Sigmoid colon (tissue), 7 donors: ENCODE measurements at regions of chr6 and their contacts with region 1.

Region 1: DNA sequence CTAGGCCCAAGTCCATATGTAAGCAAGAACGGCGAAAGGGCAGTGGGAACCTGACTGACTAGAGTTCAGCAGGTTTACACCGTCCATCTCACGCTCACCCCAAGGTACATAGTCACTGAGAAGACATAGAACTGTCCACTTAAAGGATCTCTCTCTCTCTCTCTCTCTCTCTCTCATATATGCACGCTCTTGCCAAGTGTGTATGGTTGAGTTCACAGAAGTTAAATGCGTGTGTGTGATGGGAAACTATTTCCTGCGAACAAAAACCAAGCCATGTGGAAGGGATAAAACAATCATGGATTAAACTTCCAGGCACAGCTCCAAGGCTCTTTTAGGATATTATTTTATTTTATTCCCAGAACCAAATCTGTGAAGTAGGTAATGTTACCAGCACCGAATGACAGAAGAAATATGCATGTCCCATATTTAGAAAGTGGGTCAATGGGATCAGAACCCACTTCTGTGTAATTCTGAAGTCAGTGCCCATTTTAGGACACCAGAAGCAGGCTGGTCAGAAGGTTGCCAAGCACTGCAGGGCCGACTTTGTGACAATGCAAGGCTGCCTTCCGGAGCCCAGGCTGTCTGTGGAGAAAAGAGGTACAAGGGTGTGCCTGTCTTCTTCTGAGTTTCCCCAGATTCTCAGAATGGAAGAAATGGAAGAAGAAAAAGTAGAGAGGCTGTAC is 49.2 kb upstream of the MAP7 start:
- DNase-seq: no peak
- H3K4me3 ChIP-seq: no peak overlapping the region
- H3K27ac ChIP-seq: peak overlapping the region; percentile 25 to 62 (median 54)
- H3K4me1 ChIP-seq: peaks cover 0 to 32% (median 30%) of the 10 kb centered on the region in 4 donors
- H3K27me3 ChIP-seq: no peaks in the 10 kb centered on the region
- CTCF ChIP-seq: no peak
- EP300 ChIP-seq: no peak
- POLR2A ChIP-seq: no peak

Region 2: DNA sequence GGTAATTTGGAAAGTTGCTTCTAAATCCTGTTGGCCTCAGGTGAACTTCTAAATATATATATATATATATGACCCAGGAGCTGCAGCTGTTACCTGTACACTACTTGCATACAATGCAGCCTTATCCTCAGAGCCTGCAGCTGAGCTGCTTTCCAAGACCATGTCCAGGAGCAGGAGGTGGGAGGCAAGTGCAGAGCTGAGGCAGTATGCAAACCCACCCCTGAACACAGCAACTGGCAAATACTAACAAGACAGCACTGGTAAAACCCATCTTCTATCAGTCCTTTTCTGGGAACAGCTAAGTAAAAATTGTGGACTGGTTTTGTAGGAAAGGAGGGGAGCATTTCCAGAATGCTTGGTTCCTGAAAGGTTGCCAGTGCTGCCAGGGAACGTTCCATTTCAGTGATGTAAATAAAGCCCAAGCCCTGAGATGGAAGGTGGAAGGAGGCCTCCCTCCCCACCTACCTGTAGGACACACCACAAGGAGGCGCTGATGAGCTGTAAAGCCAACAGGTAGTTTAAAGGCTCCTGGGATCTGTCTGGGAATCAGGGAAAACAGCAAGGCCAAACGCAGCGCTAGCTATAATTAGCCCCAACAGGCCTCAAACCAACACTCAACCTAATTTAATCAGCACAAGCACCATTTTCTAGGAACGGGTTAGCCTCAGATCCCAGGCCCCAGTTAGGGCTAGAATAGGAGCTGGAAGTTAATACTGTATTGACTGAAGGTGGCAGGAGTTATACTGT is 44.6 kb after region 1 on chr6:
- intact Hi-C with region 1: loop called (anchors 5 kb)
- DNase-seq: peak; percentile 91
- H3K4me3 ChIP-seq: no peak overlapping the region
- H3K27ac ChIP-seq: peak overlapping the region in 3 of 4 donors; percentile 38 to 73 (median 54)
- H3K4me1 ChIP-seq: peaks cover 0 to 28% (median 17%) of the 10 kb centered on the region in 4 donors
- H3K27me3 ChIP-seq: no peaks in the 10 kb centered on the region
- CTCF ChIP-seq: peak; percentile 44 to 78 (median 61)
- EP300 ChIP-seq: no peak
- POLR2A ChIP-seq: no peak

Region 3: GRCh38 chr6:136677831-136678230 is 78.4 kb after region 1 on chr6:
- intact Hi-C with region 1: no loop called
- DNase-seq: no peak
- H3K4me3 ChIP-seq: no peak overlapping the region
- H3K27ac ChIP-seq: no peak overlapping the region
- H3K4me1 ChIP-seq: no peaks in the 10 kb centered on the region
- H3K27me3 ChIP-seq: no peaks in the 10 kb centered on the region
- CTCF ChIP-seq: no peak
- EP300 ChIP-seq: no peak
- POLR2A ChIP-seq: no peak